Head of caudate nucleus (tissue), 42 donors: ENCODE measurements at regions of chr11 and their contacts with region 1.

Region 1: GRCh38 chr11:131246663-131247062 is 123.8 kb upstream of the NTM start:
- DNase-seq: peak; percentile 37 to 93 (median 82)

Region 2: GRCh38 chr11:131392528-131393255 is 146.0 kb after region 1 on chr11:
- intact Hi-C with region 1: loop called (anchors 5 kb)
- DNase-seq: peak in 29 of 42 donors; percentile 40 to 87 (median 61)

Region 3: DNA sequence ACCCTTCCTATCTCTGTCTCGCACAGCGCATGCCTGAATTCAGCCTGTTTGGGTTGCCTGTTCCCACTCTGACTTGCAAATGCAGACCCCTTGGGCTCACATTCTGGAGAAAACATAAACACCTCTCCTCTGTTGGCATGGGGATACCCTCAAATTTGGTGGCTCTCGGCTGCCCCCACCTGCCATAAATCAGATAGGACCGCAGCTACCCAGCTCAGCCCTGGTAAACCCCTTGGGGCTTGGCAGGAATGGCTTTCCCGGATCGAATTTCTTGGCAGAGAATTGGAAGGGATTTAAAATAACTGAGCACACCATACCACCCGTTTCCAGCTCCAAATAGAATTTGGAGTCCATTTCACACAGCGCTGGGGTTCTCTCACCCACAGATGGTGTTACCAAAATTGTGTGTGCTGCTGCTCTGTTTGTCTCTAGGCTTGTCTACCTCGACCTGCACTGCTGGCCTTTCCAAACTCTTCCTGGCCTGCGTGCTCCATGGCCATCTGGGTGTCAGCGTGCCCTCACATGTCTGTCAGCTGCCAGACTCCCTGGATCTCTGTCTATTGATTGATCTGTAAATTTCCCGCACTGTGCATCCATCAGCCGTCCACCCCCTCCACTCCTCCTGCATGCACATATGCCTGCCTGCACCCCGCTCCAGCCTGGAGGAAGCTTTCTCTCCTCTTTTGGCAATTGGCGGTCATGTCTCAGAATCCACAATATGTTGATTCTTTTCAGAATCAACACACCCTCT is 257.7 kb after region 1 on chr11:
- intact Hi-C with region 1: loop called (anchors 5 kb)
- DNase-seq: peak; percentile 36 to 89 (median 74)

Region 4: GRCh38 chr11:131674051-131674755 is 427.5 kb after region 1 on chr11:
- intact Hi-C with region 1: loop called (anchors 10 kb)
- DNase-seq: peak; percentile 51 to 96 (median 91)